PC-9 (cell line): ENCODE measurements at regions of chrX and their contacts with region 1.

Region 1: GRCh38 chrX:136268051-136269048 is 17.1 kb upstream of the MAP7D3 start:
- DNase-seq: peak in 1 of 2 experiments; percentile 46
- H3K4me3 ChIP-seq: no peak overlapping the region
- H3K27ac ChIP-seq: no peak overlapping the region
- H3K4me1 ChIP-seq: peaks cover 19% of the 10 kb centered on the region
- H3K27me3 ChIP-seq: no peaks in the 10 kb centered on the region
- CTCF ChIP-seq: peak; percentile 91

Region 2: GRCh38 chrX:135931644-135932487 is 336.5 kb before region 1 on chrX:
- CTCF ChIA-PET with region 1: no interaction called
- POLR2A ChIA-PET with region 1: no interaction called
- intact Hi-C with region 1: loop called (anchors 5 kb)
- DNase-seq: peak; percentile 43 to 49
- H3K4me3 ChIP-seq: no peak overlapping the region
- H3K27ac ChIP-seq: no peak overlapping the region
- H3K4me1 ChIP-seq: no peaks in the 10 kb centered on the region
- H3K27me3 ChIP-seq: peaks cover 60% of the 10 kb centered on the region
- CTCF ChIP-seq: peak; percentile 83

Region 3: DNA sequence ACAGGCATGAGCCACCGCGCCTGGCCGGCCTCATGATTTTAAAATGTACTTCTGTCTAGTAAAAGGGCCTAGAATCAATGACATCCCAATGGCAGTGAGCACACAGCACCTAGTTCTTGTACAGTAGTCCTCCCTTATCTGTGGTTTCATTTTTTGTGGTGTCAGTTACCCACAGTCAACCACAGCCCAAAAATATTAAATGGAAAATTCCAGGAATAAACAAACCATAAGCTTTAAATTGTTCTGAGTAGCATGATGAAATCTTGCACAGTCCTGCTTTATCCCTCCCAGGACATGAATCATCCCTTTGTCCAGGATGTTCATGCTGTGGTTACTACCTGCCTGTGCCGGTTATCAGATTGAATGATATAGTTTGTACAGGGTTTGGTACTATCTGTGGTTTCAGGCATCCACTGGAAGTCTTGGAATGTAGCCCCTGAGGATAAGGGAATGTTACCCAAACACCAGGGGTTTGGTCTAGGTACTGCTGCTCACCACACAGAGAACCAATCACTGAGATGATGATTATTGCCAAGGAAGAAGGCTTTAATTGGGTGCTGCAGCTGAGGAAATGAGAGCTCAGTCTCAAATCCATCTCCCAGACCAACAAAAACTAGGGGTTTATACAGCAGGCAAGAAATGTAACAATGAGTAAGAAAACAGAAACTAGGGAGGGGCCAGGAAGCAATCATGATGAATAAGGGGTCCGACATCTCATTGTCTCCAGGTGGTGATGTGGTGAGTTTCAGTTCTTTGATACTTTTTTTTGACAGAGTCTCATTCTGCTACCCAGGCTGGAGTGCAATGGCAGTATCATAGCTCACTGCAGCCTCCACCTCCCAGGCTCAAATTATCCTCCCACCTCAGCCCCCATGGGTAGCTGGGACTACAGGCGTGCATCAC is 137.2 kb before region 1 on chrX:
- CTCF ChIA-PET with region 1: no interaction called
- POLR2A ChIA-PET with region 1: no interaction called
- intact Hi-C with region 1: loop called (anchors 1 kb)
- DNase-seq: peak; percentile 61 to 99
- H3K4me3 ChIP-seq: no peak overlapping the region
- H3K27ac ChIP-seq: peak overlapping the region; percentile 88
- H3K4me1 ChIP-seq: peaks cover 35% of the 10 kb centered on the region
- H3K27me3 ChIP-seq: no peaks in the 10 kb centered on the region
- CTCF ChIP-seq: no peak

Region 4: GRCh38 chrX:136472730-136473129 is 204.4 kb after region 1 on chrX:
- CTCF ChIA-PET with region 1: interaction called, 11 read pairs
- POLR2A ChIA-PET with region 1: no interaction called
- intact Hi-C with region 1: no loop called
- DNase-seq: no peak
- H3K4me3 ChIP-seq: no peak overlapping the region
- H3K27ac ChIP-seq: no peak overlapping the region
- H3K4me1 ChIP-seq: peaks cover 26% of the 10 kb centered on the region
- H3K27me3 ChIP-seq: no peaks in the 10 kb centered on the region
- CTCF ChIP-seq: no peak

Region 5: GRCh38 chrX:136577552-136577951 is 309.2 kb after region 1 on chrX:
- CTCF ChIA-PET with region 1: no interaction called
- POLR2A ChIA-PET with region 1: no interaction called
- intact Hi-C with region 1: loop called (anchors 1 kb)
- DNase-seq: peak in 1 of 2 experiments; percentile 68
- H3K4me3 ChIP-seq: no peak overlapping the region
- H3K27ac ChIP-seq: no peak overlapping the region
- H3K4me1 ChIP-seq: peaks cover 15% of the 10 kb centered on the region
- H3K27me3 ChIP-seq: no peaks in the 10 kb centered on the region
- CTCF ChIP-seq: peak; percentile 74